WTC11 (cell line): ENCODE measurements at regions of chr6 and their contacts with region 1.

Region 1: DNA sequence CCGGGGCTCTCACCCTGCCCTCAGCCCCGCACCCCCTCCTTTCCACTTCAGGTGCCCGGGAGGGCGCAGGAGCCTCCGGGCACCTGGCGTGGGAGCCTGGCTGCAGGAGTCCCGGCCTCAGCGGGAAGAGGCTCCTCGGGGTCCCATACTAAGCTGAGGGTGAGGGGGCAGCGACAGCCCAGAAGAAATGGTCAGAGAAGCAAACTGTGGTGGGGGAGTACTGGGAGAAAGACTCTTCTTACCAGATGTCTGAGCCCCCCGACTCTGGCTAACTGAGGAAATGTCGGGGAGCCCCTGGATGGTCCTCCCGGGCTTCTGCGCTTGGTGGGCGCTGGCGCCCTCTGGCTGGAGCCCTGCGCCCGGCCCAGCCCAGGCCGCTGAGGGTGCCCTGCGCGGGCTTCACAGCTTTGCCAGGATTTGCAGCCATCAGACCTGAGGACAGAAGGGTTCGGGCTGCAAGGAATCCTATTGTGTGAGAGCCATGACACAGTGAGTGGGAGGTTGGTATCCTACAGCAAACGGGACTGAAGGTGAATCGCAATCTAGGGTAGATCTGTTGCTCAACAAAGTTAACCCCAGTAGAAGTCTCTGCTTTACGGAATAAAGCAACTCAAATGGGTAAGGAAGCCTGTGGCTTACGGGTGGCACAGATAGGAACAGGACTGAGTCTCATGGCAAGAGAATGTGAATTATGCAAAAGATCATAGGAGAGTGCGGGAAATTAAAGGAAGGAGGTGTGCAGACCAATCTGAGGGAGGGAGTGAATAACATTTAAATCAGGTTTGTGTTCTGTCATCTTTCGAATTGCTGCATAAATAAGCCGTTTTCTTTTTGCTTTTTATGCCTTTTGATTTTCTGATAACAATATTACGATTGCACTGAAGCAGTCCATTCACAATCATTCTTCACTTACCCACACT is 639 bp upstream of the RCAN2 start:
- DNase-seq: peak; percentile 56
- ATAC-seq: peak; percentile 73
- H3K4me3 Mint-ChIP-seq: peak overlapping the region; percentile 57
- H3K27ac Mint-ChIP-seq: no peak overlapping the region
- H3K4me1 Mint-ChIP-seq: peaks cover 34% of the 10 kb centered on the region
- H3K27me3 Mint-ChIP-seq: peaks cover 50% of the 10 kb centered on the region
- CTCF ChIP-seq: no peak

Region 2: DNA sequence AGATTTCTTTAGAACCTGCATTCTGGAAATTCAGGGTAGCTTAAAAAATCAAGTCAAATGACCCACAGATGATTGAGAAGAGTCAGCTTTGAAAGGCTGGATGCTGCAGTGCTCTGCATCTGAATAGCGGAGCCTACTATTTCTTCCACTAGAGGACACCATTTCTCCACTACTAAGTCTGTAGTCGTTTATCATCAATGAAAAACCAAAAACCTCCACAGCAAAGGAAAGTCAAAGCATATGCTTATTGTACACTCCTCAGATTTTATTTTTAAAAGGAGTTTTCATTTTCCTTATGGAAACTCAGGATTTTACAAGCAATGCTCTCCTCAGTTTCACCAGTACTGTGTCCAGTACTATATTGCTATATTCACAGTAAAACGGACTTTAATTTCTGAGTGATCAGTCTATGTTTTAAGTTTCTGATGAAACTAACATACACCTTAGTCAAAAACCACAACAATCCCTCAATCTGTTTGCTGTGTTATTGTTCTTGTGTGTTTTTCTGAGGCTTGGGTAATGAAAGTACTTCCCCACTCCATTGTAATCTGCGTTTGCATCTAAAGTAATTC is 270.6 kb before region 1 on chr6:
- CTCF ChIA-PET with region 1: interaction called, 13 read pairs
- POLR2A ChIA-PET with region 1: no interaction called
- DNase-seq: no peak
- ATAC-seq: peak; percentile 81
- H3K4me3 Mint-ChIP-seq: no peak overlapping the region
- H3K27ac Mint-ChIP-seq: no peak overlapping the region
- H3K4me1 Mint-ChIP-seq: peaks cover 8% of the 10 kb centered on the region
- H3K27me3 Mint-ChIP-seq: peaks cover 11% of the 10 kb centered on the region
- CTCF ChIP-seq: peak; percentile 36; the same call in 1 of the 2 replicates

Region 3: GRCh38 chr6:46357591-46357990 is 134.3 kb before region 1 on chr6:
- CTCF ChIA-PET with region 1: no interaction called
- POLR2A ChIA-PET with region 1: no interaction called
- DNase-seq: no peak
- ATAC-seq: no peak
- H3K4me3 Mint-ChIP-seq: no peak overlapping the region
- H3K27ac Mint-ChIP-seq: no peak overlapping the region
- H3K4me1 Mint-ChIP-seq: peaks cover 26% of the 10 kb centered on the region
- H3K27me3 Mint-ChIP-seq: peaks cover 16% of the 10 kb centered on the region; the same call in 1 of the 2 replicates
- CTCF ChIP-seq: no peak

Region 4: GRCh38 chr6:46419576-46420002 is 72.3 kb before region 1 on chr6:
- CTCF ChIA-PET with region 1: interaction called, 13 read pairs
- POLR2A ChIA-PET with region 1: no interaction called
- DNase-seq: peak; percentile 38
- ATAC-seq: 0 out of 2 replicates have a peak, but pooled peaks have one; percentile 28
- H3K4me3 Mint-ChIP-seq: no peak overlapping the region
- H3K27ac Mint-ChIP-seq: no peak overlapping the region
- H3K4me1 Mint-ChIP-seq: peaks cover 15% of the 10 kb centered on the region
- H3K27me3 Mint-ChIP-seq: no peaks in the 10 kb centered on the region
- CTCF ChIP-seq: no peak; the same call in none of the 2 replicates

Region 5: GRCh38 chr6:46465294-46466165 is 26.4 kb before region 1 on chr6:
- CTCF ChIA-PET with region 1: interaction called, 39 read pairs
- POLR2A ChIA-PET with region 1: no interaction called
- DNase-seq: no peak
- ATAC-seq: no peak
- H3K4me3 Mint-ChIP-seq: no peak overlapping the region
- H3K27ac Mint-ChIP-seq: peak overlapping the region; percentile 46; the same call in 1 of the 2 replicates
- H3K4me1 Mint-ChIP-seq: peaks cover 50% of the 10 kb centered on the region
- H3K27me3 Mint-ChIP-seq: no peaks in the 10 kb centered on the region
- CTCF ChIP-seq: no peak